ENCODE measurements at regions of chr6 and their contacts with region 1.

Region 1: DNA sequence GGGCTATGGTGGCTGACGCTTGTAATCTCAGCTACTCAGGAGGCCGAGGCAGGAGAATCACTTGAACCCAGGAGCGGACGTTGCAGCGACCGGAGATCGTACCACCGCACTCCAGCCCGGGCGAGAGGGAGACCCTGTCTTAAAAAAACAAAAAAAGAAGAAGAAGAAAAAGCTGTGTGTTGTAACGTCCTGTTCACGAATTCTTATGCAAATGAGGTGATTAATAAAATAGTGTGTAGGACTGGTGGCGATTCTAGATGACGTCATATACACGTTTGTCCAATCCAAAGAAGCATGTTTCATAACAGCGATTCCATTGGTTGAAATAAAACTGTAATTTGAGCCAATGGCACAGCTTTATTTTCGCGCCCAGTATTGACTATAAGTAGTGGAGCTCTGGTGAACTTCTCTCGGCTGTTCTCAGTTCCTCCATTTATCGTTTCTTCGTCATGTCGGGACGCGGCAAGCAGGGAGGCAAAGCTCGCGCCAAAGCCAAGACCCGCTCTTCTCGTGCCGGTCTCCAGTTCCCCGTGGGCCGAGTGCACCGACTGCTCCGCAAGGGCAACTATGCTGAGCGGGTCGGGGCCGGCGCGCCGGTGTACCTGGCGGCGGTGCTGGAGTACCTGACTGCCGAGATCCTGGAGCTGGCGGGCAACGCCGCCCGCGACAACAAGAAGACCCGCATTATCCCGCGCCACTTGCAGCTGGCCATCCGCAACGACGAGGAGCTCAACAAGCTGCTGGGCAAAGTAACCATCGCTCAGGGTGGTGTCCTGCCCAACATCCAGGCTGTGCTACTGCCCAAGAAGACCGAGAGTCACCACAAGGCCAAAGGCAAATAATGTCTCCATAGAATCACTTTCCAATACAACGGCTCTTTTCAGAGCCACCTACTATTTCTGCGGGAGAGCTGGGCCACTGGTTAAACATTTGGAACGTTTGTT is 47.0 kb downstream of the OR2B2 start:
- DNase-seq: peak; percentile 99
- H3K4me3 ChIP-seq: peak overlapping the region; percentile 67
- H3K27ac ChIP-seq: peak overlapping the region; percentile 99
- H3K4me1 ChIP-seq: peaks cover 60% of the 10 kb centered on the region
- CTCF ChIP-seq: no peak

Region 2: GRCh38 chr6:26045065-26045927 is 1819.9 kb before region 1 on chr6:
- CTCF ChIA-PET with region 1: no interaction called
- POLR2A ChIA-PET with region 1: interaction called, 16 read pairs
- intact Hi-C with region 1: no loop called
- DNase-seq: peak; percentile 97
- H3K4me3 ChIP-seq: peak overlapping the region; percentile 67
- H3K27ac ChIP-seq: peak overlapping the region; percentile 99
- H3K4me1 ChIP-seq: peaks cover 66% of the 10 kb centered on the region
- CTCF ChIP-seq: peak; percentile 54

Region 3: DNA sequence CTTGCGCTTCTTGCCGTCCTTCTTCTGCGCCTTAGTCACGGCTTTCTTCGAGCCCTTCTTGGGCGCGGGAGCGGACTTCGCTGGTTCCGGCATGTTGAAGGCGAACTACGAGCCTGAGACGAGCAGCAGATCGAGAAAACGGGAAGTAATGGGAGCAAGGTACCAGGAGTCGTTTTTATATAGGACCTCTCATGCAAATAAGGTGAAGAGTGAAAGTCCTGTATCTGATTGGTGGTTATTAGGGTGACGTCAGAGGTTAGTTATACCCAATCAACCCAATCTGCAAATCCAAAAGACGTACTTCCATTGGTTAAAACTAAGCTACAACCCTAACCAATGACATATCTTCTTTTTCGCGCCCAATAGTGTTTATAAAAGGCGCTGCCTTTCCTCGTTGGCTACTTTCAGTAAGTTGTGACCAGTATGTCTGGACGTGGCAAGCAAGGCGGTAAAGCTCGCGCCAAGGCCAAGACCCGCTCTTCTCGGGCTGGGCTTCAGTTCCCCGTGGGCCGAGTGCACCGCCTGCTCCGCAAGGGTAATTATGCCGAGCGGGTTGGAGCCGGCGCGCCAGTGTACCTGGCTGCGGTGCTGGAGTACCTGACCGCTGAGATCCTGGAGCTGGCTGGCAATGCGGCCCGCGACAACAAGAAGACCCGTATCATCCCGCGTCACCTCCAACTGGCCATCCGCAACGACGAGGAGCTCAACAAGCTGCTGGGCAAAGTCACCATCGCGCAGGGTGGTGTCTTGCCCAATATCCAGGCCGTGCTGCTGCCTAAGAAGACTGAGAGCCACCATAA is 718.3 kb before region 1 on chr6:
- CTCF ChIA-PET with region 1: no interaction called
- POLR2A ChIA-PET with region 1: interaction called, 15 read pairs
- intact Hi-C with region 1: no loop called
- DNase-seq: peak; percentile 98
- H3K4me3 ChIP-seq: peak overlapping the region; percentile 73
- H3K27ac ChIP-seq: peak overlapping the region; percentile 99
- H3K4me1 ChIP-seq: peaks cover 60% of the 10 kb centered on the region
- CTCF ChIP-seq: no peak

Region 4: GRCh38 chr6:27838058-27838944 is 26.9 kb before region 1 on chr6:
- CTCF ChIA-PET with region 1: interaction called, 5 read pairs
- POLR2A ChIA-PET with region 1: interaction called, 1,237 read pairs
- intact Hi-C with region 1: loop called (anchors 1 kb)
- DNase-seq: peak; percentile 99
- H3K4me3 ChIP-seq: peak overlapping the region; percentile 87
- H3K27ac ChIP-seq: peak overlapping the region; percentile 97
- H3K4me1 ChIP-seq: peaks cover 37% of the 10 kb centered on the region
- CTCF ChIP-seq: no peak

Region 5: GRCh38 chr6:27879837-27880236 is 14.7 kb after region 1 on chr6:
- CTCF ChIA-PET with region 1: no interaction called
- POLR2A ChIA-PET with region 1: interaction called, 18 read pairs
- intact Hi-C with region 1: no loop called
- DNase-seq: no peak
- H3K4me3 ChIP-seq: no peak overlapping the region
- H3K27ac ChIP-seq: peak overlapping the region; percentile 22
- H3K4me1 ChIP-seq: peaks cover 5% of the 10 kb centered on the region
- CTCF ChIP-seq: no peak